IMR-90 (cell line): ENCODE measurements at regions of chr10 and their contacts with region 1.

Region 1: GRCh38 chr10:5094265-5095205 is at the start of gene AKR1C3:
- DNase-seq: peak; percentile 65
- ATAC-seq: peak; percentile 91
- H3K4me3 ChIP-seq: no peak within 1 kb of the TSS
- H3K27ac ChIP-seq: no peak within 1 kb of the TSS
- H3K4me1 ChIP-seq: no peaks in the 10 kb centered on the region
- H3K27me3 ChIP-seq: no peaks in the 10 kb centered on the region; the same call in none of the 2 replicates
- CTCF ChIP-seq: peak; percentile 63
- POLR2A ChIP-seq: no peak
- RAD21 ChIP-seq: peak; percentile 61
- total RNA-seq, gene AKR1C3: 0.18 and 0.28 TPM in 2 replicates

Region 2: GRCh38 chr10:4947635-4948596 is 146.6 kb before region 1 on chr10:
- CTCF ChIA-PET with region 1: no interaction called
- POLR2A ChIA-PET with region 1: no interaction called
- dilution Hi-C with region 1: no loop called
- in situ Hi-C with region 1: no loop called
- intact Hi-C with region 1: loop called (anchors 5 kb)
- DNase-seq: peak; percentile 97
- ATAC-seq: peak; percentile 80
- H3K4me3 ChIP-seq: no peak overlapping the region
- H3K27ac ChIP-seq: peak overlapping the region; percentile 94
- H3K4me1 ChIP-seq: peaks cover 22% of the 10 kb centered on the region
- H3K27me3 ChIP-seq: no peaks in the 10 kb centered on the region
- CTCF ChIP-seq: no peak
- POLR2A ChIP-seq: no peak
- RAD21 ChIP-seq: no peak

Region 3: GRCh38 chr10:4981722-4982471 is 112.6 kb before region 1 on chr10:
- CTCF ChIA-PET with region 1: no interaction called
- POLR2A ChIA-PET with region 1: no interaction called
- dilution Hi-C with region 1: no loop called
- in situ Hi-C with region 1: no loop called
- intact Hi-C with region 1: loop called (anchors 1 kb)
- DNase-seq: peak; percentile 37
- ATAC-seq: peak; percentile 18; the same call in 1 of the 2 replicates
- H3K4me3 ChIP-seq: no peak overlapping the region
- H3K27ac ChIP-seq: no peak overlapping the region
- H3K4me1 ChIP-seq: peaks cover 4% of the 10 kb centered on the region; the same call in 1 of the 2 replicates
- H3K27me3 ChIP-seq: no peaks in the 10 kb centered on the region
- CTCF ChIP-seq: peak; percentile 42
- POLR2A ChIP-seq: no peak
- RAD21 ChIP-seq: peak; percentile 41

Region 4: GRCh38 chr10:5018134-5018533 is 76.4 kb before region 1 on chr10:
- CTCF ChIA-PET with region 1: no interaction called
- POLR2A ChIA-PET with region 1: no interaction called
- dilution Hi-C with region 1: no loop called
- in situ Hi-C with region 1: no loop called
- intact Hi-C with region 1: loop called (anchors 2 kb)
- DNase-seq: no peak
- ATAC-seq: 0 out of 2 replicates have a peak, but pooled peaks have one; percentile 4
- H3K4me3 ChIP-seq: no peak overlapping the region
- H3K27ac ChIP-seq: no peak overlapping the region
- H3K4me1 ChIP-seq: peaks cover 3% of the 10 kb centered on the region; the same call in 1 of the 2 replicates
- H3K27me3 ChIP-seq: no peaks in the 10 kb centered on the region
- CTCF ChIP-seq: no peak
- POLR2A ChIP-seq: no peak
- RAD21 ChIP-seq: no peak

Region 5: GRCh38 chr10:5283305-5284158 is 189.0 kb after region 1 on chr10:
- CTCF ChIA-PET with region 1: no interaction called
- POLR2A ChIA-PET with region 1: no interaction called
- dilution Hi-C with region 1: no loop called
- in situ Hi-C with region 1: no loop called
- intact Hi-C with region 1: loop called (anchors 10 kb)
- DNase-seq: peak; percentile 47
- ATAC-seq: peak; percentile 95
- H3K4me3 ChIP-seq: no peak overlapping the region
- H3K27ac ChIP-seq: no peak overlapping the region
- H3K4me1 ChIP-seq: 0 out of 2 replicates have a peak, but pooled peaks cover 1% of the 10 kb centered on the region
- H3K27me3 ChIP-seq: no peaks in the 10 kb centered on the region; the same call in none of the 2 replicates
- CTCF ChIP-seq: peak; percentile 60
- POLR2A ChIP-seq: no peak
- RAD21 ChIP-seq: peak; percentile 60

Region 6: GRCh38 chr10:5385224-5385623 is 290.7 kb after region 1 on chr10:
- CTCF ChIA-PET with region 1: no interaction called
- POLR2A ChIA-PET with region 1: no interaction called
- dilution Hi-C with region 1: no loop called
- in situ Hi-C with region 1: no loop called
- intact Hi-C with region 1: loop called (anchors 2 kb)
- DNase-seq: no peak
- ATAC-seq: no peak
- H3K4me3 ChIP-seq: no peak overlapping the region
- H3K27ac ChIP-seq: no peak overlapping the region
- H3K4me1 ChIP-seq: no peaks in the 10 kb centered on the region
- H3K27me3 ChIP-seq: peaks cover 7% of the 10 kb centered on the region
- CTCF ChIP-seq: no peak
- POLR2A ChIP-seq: no peak
- RAD21 ChIP-seq: no peak